A549 (cell line): ENCODE measurements at regions of chr2 and their contacts with region 1.

Region 1: DNA sequence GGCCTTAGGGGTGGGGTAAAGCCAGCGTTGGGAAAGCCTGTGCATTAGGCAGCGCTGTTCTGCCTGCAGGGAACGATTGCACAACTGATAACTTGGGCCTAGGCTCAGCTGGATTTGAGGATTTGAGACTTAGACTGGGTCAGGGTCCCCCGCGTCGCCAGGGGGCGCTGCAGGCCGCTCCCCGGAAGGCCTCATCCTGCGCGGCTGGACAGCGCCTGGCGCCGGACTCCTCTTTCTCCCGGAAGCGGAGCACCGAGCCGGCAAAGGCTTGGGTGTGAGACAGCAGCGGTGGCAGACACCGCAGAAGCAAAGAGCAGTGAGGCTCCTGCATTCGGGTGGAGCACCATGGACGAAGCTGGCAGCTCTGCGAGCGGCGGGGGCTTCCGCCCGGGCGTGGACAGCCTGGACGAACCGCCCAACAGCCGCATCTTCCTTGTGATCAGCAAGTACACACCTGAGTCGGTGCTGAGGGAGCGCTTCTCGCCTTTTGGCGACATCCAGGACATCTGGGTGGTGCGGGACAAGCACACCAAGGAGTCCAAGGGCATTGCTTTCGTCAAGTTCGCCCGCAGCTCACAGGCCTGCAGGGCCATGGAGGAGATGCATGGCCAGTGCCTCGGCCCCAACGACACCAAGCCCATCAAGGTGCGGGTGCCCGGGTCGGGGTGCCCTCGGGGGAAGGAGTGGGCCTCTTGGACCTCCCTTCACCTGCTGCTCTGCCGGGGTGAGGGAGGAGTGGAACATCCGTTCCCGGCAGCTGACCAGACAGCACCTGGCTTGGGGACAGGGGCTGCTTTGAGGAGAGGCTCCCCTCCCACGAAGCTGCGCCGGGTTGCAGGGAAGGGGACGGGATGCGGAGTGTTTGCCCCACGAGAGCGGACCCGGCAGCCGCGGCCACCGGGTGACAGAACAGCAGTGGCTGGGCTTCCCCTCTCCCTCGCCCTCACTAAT is at the start of gene RBM45:
- DNase-seq: peak; percentile 87 to 94
- ATAC-seq: peak; percentile 95 to 99
- H3K4me3 ChIP-seq: peak within 1 kb of the TSS; percentile 75
- H3K27ac ChIP-seq: peak within 1 kb of the TSS; percentile 84 to 91
- H3K4me1 ChIP-seq: peaks cover 8% of the 10 kb centered on the region; the same call in 2 of the 3 replicates
- CTCF ChIP-seq: peak; percentile 90
- EP300 ChIP-seq: no peak
- POLR2A ChIP-seq: peak; percentile 94
- RAD21 ChIP-seq: peak; percentile 33 to 40; a peak in 4 of 5 replicates
- polyA plus RNA-seq, gene RBM45: 15.5 and 20.9 TPM in 2 replicates

Region 2: DNA sequence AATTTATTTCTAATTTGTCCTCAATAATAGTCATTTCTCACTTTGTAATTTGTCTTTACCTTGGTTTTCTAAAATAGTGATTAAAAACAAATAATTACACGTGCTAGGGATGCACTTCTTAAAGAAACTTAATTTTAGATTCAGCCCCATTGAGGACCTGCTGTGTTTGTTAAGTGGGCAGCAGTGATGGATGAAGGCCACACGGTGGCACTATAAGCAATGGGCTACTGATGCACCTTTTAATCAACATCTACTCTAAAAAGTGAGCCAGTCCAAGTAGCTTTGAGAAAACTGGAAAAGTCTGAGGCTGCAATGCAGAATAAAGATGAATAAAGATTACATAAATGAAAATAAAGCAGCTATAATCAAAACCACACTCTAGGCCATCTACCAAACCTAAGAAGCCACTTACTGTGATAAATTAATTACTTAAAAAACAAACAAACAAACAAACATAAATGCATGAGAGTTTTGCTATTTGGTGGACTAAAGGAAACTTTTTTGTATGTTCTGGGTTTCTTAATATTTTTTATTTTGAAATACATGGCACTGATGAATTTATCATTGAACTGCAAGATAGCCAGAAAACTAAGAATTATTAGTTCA is 129.2 kb before region 1 on chr2:
- CTCF ChIA-PET with region 1: interaction called, 10 read pairs
- POLR2A ChIA-PET with region 1: no interaction called
- DNase-seq: peak; percentile 48 to 71
- ATAC-seq: peak; percentile 80 to 92
- H3K4me3 ChIP-seq: no peak overlapping the region
- H3K27ac ChIP-seq: no peak overlapping the region
- H3K4me1 ChIP-seq: peaks cover 13% of the 10 kb centered on the region
- CTCF ChIP-seq: peak; percentile 78
- EP300 ChIP-seq: no peak
- POLR2A ChIP-seq: no peak
- RAD21 ChIP-seq: peak; percentile 73 to 79

Region 3: DNA sequence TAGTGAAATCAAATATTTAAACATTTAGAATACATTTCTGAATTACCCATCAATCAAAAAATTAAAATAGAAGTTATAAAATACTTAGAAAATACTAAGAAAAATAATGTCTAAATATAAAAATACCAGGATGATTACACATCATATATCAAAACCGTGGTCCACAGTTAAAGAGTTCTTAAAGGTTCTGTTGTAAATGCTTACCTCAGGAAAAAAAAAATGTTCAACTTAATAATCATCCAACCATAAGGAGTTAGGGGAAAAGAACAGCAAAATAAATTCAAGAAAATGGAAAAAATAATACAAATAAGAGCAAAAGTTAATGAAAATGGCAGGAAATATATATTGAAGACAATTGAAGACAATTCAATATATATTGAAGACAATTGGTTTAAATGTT is 83.1 kb before region 1 on chr2:
- CTCF ChIA-PET with region 1: no interaction called
- POLR2A ChIA-PET with region 1: no interaction called
- DNase-seq: no peak
- ATAC-seq: no peak
- H3K4me3 ChIP-seq: no peak overlapping the region
- H3K27ac ChIP-seq: no peak overlapping the region
- H3K4me1 ChIP-seq: peaks cover 29% of the 10 kb centered on the region; the same call in 2 of the 3 replicates
- CTCF ChIP-seq: no peak
- EP300 ChIP-seq: no peak
- POLR2A ChIP-seq: no peak
- RAD21 ChIP-seq: no peak

Region 4: DNA sequence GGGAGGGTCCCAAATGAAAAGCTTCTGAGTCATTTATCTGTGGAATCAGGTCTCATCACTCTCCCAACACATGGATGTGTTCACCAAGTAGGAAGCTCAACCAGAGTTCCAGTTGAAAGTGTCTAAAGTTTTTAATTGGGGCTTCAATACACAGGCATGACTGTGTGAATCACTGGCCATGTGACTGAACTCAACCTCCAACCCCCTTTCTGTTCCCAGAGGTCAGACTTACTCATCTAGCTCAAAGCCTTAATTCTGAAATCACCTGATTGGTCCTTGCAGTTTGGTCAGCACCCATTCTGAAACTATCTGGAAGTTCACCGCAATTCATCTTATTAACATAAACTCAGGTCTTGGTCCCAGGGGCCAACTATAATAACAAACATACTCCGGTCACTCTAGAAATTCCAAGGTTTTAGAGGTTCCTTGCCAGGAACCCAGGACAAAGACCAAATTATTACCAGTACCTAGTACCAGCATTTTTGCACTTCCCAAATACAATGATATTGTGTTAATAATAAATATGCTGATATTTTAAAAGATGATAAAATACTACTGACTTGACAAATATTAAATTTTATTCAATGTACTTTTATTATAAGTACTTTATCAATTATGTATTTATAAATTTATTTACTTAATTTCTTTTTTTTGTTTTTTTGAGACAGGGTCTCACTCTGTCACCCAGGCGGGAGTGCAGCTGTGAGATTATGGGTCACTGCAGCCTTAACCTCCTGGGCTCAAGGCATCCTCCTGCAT is 11.0 kb before region 1 on chr2:
- CTCF ChIA-PET with region 1: interaction called, 11 read pairs
- POLR2A ChIA-PET with region 1: no interaction called
- DNase-seq: no peak
- ATAC-seq: peak in 1 of 2 experiments; percentile 25; a peak in 2 of 6 replicates
- H3K4me3 ChIP-seq: no peak overlapping the region
- H3K27ac ChIP-seq: no peak overlapping the region
- H3K4me1 ChIP-seq: 0 out of 3 replicates have a peak, but pooled peaks cover 6% of the 10 kb centered on the region
- CTCF ChIP-seq: no peak
- EP300 ChIP-seq: no peak
- POLR2A ChIP-seq: no peak
- RAD21 ChIP-seq: no peak

Region 5: DNA sequence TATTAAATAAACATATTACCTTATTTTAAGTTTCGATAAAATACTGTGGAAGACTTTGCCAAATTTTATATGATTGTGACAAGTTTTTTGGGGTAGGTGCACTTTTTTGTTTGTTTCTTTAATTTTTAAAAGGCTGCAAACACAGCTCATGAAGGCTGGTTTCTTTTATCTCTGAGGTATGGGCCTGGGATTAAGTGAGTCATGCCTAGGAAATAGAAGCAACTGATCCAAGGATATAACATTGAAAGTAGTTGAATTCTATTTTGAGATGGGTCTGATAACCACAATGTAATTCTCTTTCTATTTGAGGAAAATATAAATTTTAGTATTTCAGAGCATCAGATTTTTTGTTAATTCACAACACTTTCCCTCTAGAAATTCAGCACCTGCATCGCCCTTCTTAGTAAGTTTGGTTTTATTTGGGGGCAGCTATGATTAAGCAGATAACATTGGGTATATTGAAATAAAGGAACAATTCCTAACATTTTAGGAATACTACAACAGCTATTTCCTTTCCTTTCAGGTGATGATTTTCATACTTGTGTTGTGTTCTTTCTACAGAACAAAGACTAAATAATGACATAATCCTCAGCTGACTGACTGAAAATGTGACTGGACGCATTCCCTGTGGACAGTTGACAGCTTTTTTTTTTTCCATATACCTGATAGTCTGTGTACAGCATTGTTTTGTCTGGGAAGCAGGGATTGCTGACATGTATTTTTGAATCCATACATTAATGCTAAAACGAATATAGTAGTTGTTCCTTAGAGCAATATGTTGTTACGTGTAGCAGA is 16.6 kb after region 1 on chr2:
- CTCF ChIA-PET with region 1: interaction called, 27 read pairs
- POLR2A ChIA-PET with region 1: no interaction called
- DNase-seq: no peak
- ATAC-seq: no peak
- H3K4me3 ChIP-seq: no peak overlapping the region
- H3K27ac ChIP-seq: no peak overlapping the region
- H3K4me1 ChIP-seq: no peaks in the 10 kb centered on the region
- CTCF ChIP-seq: no peak
- EP300 ChIP-seq: no peak
- POLR2A ChIP-seq: no peak
- RAD21 ChIP-seq: no peak

Region 6: DNA sequence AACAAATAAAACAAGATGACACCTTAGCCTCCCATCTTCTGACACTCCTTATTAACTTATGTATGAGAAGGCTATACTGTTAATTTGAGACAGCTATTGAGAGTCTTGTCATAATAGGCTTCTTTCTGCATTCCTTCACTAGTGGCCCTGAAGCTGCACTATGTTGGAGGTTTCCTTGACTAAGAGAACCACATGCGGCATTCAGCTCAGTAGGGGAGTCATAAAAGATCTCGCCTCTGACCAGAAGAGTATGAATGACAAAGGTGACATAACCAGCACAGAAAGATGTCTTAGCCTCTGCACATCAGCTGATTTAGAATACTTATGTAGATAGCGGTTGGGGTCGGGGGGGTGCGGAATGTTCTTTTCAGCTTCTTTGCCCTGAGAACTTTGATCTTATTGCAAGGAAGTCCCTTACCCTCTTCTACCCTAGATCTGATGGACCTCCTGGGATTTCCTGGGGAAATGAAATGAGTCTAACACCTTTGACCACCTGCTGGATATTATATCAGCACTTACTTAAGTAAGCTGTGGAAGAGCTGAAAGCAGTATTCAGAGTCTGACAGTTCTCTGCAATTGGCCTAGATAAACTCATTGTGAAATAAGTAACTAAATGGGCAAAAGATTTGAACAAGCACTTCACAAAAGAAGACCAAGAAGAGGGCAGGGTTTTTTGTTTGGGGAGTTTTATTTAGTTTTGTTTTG is 24.0 kb after region 1 on chr2:
- CTCF ChIA-PET with region 1: interaction called, 27 read pairs
- POLR2A ChIA-PET with region 1: no interaction called
- DNase-seq: no peak
- ATAC-seq: no peak
- H3K4me3 ChIP-seq: no peak overlapping the region
- H3K27ac ChIP-seq: no peak overlapping the region
- H3K4me1 ChIP-seq: no peaks in the 10 kb centered on the region
- CTCF ChIP-seq: no peak
- EP300 ChIP-seq: no peak
- POLR2A ChIP-seq: no peak
- RAD21 ChIP-seq: no peak

Region 7: DNA sequence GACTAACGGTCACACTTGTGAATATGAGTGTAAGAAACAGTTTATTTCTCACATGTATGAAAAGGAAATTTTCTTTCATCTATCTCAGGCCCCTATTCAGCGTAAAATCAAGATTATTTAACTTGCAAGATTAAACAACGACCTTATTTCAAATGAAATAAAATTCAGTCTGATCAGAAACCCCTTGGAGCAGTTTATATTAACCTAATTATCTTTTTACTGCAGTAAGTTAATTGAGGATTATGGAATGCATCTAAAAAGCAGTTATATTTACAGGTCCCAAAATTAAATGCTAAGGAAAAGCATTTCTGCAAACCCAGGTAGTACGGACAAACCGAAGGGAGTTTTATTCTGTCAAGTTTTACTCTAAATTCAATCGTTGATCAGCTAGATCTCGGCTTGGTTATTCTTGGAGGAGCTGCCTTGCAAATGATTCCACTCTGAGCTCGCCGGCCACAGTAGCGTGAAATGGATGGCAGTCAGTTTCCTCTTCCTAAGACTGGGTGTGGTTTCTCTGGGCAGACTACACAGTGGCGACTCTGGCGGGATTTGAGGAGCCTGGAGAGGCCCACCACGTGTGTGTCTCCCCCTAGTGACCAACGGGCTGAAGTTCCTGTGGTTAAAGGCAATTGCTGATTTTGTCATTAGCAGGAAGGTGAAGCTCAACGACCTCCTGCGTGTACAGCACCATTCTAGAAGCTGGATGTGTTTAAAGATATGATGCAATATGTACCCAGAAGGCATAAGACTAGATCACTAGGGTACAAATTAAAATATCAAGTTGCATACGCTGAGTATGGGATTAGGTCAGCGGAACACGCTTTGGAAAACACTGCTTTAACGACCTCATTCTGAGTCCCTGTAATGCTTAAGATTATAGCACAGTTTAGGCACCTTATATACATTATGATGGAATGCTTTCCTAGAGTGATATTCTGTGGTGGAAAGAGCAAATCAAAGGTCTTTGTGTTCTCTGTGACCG is 302.1 kb after region 1 on chr2:
- CTCF ChIA-PET with region 1: interaction called, 43 read pairs
- POLR2A ChIA-PET with region 1: interaction called, 3 read pairs
- DNase-seq: peak; percentile 76 to 96
- ATAC-seq: peak; percentile 89 to 95
- H3K4me3 ChIP-seq: peak overlapping the region; percentile 48
- H3K27ac ChIP-seq: peak overlapping the region; percentile 93 to 95
- H3K4me1 ChIP-seq: peaks cover 14% of the 10 kb centered on the region
- CTCF ChIP-seq: peak; percentile 89
- EP300 ChIP-seq: no peak
- POLR2A ChIP-seq: peak; percentile 47
- RAD21 ChIP-seq: peak; percentile 75 to 78